ENCODE measurements at regions of chr1 and their contacts with region 1.

Region 1: GRCh38 chr1:201916649-201917249 is 28.1 kb downstream of the SHISA4 start:
- DNase-seq: peak; percentile 95
- H3K4me3 ChIP-seq: peak overlapping the region in 3 of 4 donors; percentile 11 to 24 (median 23)
- H3K27ac ChIP-seq: peak overlapping the region; percentile 85 to 97 (median 90)
- H3K4me1 ChIP-seq: peaks cover 0 to 100% (median 99%) of the 10 kb centered on the region in 4 donors
- H3K27me3 ChIP-seq: no peaks in the 10 kb centered on the region
- CTCF ChIP-seq: no peak
- EP300 ChIP-seq: peak in 2 of 4 donors; percentile 40 to 57
- POLR2A ChIP-seq: no peak

Region 2: GRCh38 chr1:201676197-201676596 is 240.6 kb before region 1 on chr1:
- intact Hi-C with region 1: no loop called
- DNase-seq: peak; percentile 78
- H3K4me3 ChIP-seq: no peak overlapping the region
- H3K27ac ChIP-seq: peak overlapping the region; percentile 5 to 71 (median 44)
- H3K4me1 ChIP-seq: peaks cover 0 to 39% (median 34%) of the 10 kb centered on the region in 4 donors
- H3K27me3 ChIP-seq: no peaks in the 10 kb centered on the region
- CTCF ChIP-seq: no peak
- EP300 ChIP-seq: no peak
- POLR2A ChIP-seq: no peak

Region 3: DNA sequence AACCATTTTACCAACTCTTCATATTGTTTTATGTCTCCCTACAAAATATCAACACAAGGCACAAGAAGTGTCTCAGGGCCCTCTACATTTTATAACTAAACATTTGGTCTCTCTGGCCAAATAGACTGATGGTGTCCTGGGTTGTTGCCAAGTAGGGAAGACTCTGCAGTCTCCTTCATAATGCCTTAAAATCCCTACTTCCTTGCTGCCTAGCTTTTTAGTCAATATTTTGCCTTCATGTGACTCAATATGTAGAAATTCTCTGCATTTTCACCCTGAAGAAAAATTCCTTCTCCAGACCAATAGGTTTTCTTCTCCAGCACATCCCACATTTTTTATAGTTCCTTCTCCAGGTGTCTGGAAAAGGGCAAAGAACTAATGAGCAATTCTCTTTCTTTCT is 160.3 kb before region 1 on chr1:
- intact Hi-C with region 1: no loop called
- DNase-seq: no peak
- H3K4me3 ChIP-seq: no peak overlapping the region
- H3K27ac ChIP-seq: no peak overlapping the region
- H3K4me1 ChIP-seq: peaks cover 0 to 36% (median 13%) of the 10 kb centered on the region in 4 donors
- H3K27me3 ChIP-seq: no peaks in the 10 kb centered on the region
- CTCF ChIP-seq: no peak
- EP300 ChIP-seq: no peak
- POLR2A ChIP-seq: no peak

Region 4: GRCh38 chr1:201946224-201946908 is 29.6 kb after region 1 on chr1 and contains the start of gene LMOD1:
- intact Hi-C with region 1: loop called (anchors 2 kb)
- DNase-seq: peak; percentile 99
- H3K4me3 ChIP-seq: peak within 1 kb of the TSS; percentile 73 to 82 (median 76)
- H3K27ac ChIP-seq: peak within 1 kb of the TSS; percentile 91 to 98 (median 92)
- H3K4me1 ChIP-seq: peaks cover 0 to 10% (median 8%) of the 10 kb centered on the region in 4 donors
- H3K27me3 ChIP-seq: no peaks in the 10 kb centered on the region
- CTCF ChIP-seq: peak in 2 of 4 experiments; percentile 13 to 23
- EP300 ChIP-seq: peak in 1 of 4 donors; percentile 42
- POLR2A ChIP-seq: peak; percentile 89 to 97
- total RNA-seq, gene LMOD1: 633 to 1,011 (median 785) TPM